ENCODE measurements at regions of chrX and their contacts with region 1.

Region 1: GRCh38 chrX:56802921-56803849 is 74.1 kb downstream of the NBDY start:
- DNase-seq: peak; percentile 76
- ATAC-seq: peak; percentile 91
- H3K4me3 ChIP-seq: peak overlapping the region; percentile 47
- H3K27ac ChIP-seq: no peak overlapping the region
- H3K4me1 ChIP-seq: no peaks in the 10 kb centered on the region; the same call in 1 of the 2 replicates
- H3K27me3 ChIP-seq: no peaks in the 10 kb centered on the region; the same call in 1 of the 2 replicates
- CTCF ChIP-seq: peak; percentile 74
- POLR2A ChIP-seq: no peak
- RAD21 ChIP-seq: peak; percentile 78

Region 2: DNA sequence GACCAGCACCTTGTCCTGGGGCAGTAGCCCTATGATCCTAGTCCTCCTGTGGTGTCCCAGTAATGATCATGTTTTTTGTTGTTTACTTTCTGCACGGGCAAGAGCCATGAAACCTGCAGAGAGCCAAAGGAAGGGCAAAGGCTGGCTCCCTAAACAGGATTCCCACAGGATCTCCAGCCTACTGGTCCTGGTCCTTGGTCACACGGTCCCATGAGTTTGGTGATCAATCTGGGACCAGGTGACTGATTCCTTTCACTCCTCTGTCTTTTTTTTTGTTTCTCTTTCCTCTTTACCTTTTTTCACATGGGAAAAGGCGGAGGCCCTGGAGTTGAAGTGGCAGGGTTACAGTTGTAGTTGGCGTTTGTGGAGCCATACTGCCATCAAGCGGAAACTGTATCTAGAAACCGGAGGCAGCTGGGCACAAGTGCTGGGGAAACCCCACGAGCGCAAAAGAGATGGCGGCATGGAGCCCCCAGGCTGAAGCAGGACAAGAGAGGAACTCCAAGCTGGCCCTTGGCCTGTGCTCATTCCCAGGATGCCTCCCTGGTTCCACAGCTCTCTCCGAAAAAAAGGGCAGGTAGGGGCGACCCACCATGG is 39.5 kb before region 1 on chrX:
- CTCF ChIA-PET with region 1: no interaction called
- POLR2A ChIA-PET with region 1: no interaction called
- dilution Hi-C with region 1: no loop called
- in situ Hi-C with region 1: no loop called
- intact Hi-C with region 1: no loop called
- DNase-seq: peak; percentile 75
- ATAC-seq: no peak; the same call in 1 of the 2 replicates
- H3K4me3 ChIP-seq: peak overlapping the region; percentile 49
- H3K27ac ChIP-seq: peak overlapping the region; percentile 39
- H3K4me1 ChIP-seq: peaks cover 3% of the 10 kb centered on the region; the same call in 1 of the 2 replicates
- H3K27me3 ChIP-seq: no peaks in the 10 kb centered on the region; the same call in 1 of the 2 replicates
- CTCF ChIP-seq: peak; percentile 63
- POLR2A ChIP-seq: no peak
- RAD21 ChIP-seq: peak; percentile 72

Region 3: GRCh38 chrX:56882581-56882980 is 79.4 kb after region 1 on chrX:
- CTCF ChIA-PET with region 1: no interaction called
- POLR2A ChIA-PET with region 1: no interaction called
- dilution Hi-C with region 1: no loop called
- in situ Hi-C with region 1: no loop called
- intact Hi-C with region 1: no loop called
- DNase-seq: no peak
- ATAC-seq: no peak
- H3K4me3 ChIP-seq: no peak overlapping the region
- H3K27ac ChIP-seq: no peak overlapping the region
- H3K4me1 ChIP-seq: no peaks in the 10 kb centered on the region
- H3K27me3 ChIP-seq: no peaks in the 10 kb centered on the region
- CTCF ChIP-seq: no peak
- POLR2A ChIP-seq: no peak
- RAD21 ChIP-seq: no peak

Region 4: GRCh38 chrX:56978172-56978571 is 175.0 kb after region 1 on chrX:
- CTCF ChIA-PET with region 1: interaction called, 3 read pairs
- POLR2A ChIA-PET with region 1: no interaction called
- dilution Hi-C with region 1: no loop called
- in situ Hi-C with region 1: loop called (anchors 25 kb)
- intact Hi-C with region 1: loop called (anchors 1 kb)
- DNase-seq: peak; percentile 44
- ATAC-seq: peak; percentile 81
- H3K4me3 ChIP-seq: no peak overlapping the region
- H3K27ac ChIP-seq: no peak overlapping the region
- H3K4me1 ChIP-seq: no peaks in the 10 kb centered on the region
- H3K27me3 ChIP-seq: no peaks in the 10 kb centered on the region; the same call in 1 of the 2 replicates
- CTCF ChIP-seq: peak; percentile 62
- POLR2A ChIP-seq: no peak
- RAD21 ChIP-seq: peak; percentile 55

Region 5: GRCh38 chrX:57121162-57121741 is 318.1 kb after region 1 on chrX and contains the start of gene SPIN2B:
- CTCF ChIA-PET with region 1: no interaction called
- POLR2A ChIA-PET with region 1: no interaction called
- dilution Hi-C with region 1: no loop called
- in situ Hi-C with region 1: loop called (anchors 25 kb)
- intact Hi-C with region 1: no loop called
- DNase-seq: peak; percentile 70
- ATAC-seq: peak; percentile 97
- H3K4me3 ChIP-seq: peak within 1 kb of the TSS; percentile 95
- H3K27ac ChIP-seq: peak within 1 kb of the TSS; percentile 92
- H3K4me1 ChIP-seq: no peaks in the 10 kb centered on the region
- H3K27me3 ChIP-seq: no peaks in the 10 kb centered on the region
- CTCF ChIP-seq: 0 out of 2 replicates have a peak, but pooled peaks have one; percentile 3
- POLR2A ChIP-seq: no peak
- RAD21 ChIP-seq: no peak
- total RNA-seq, gene SPIN2B: 3.0 and 7.2 TPM in 2 replicates